HEK293 (cell line): ENCODE measurements at regions of chr1 and their contacts with region 1.

Region 1: DNA sequence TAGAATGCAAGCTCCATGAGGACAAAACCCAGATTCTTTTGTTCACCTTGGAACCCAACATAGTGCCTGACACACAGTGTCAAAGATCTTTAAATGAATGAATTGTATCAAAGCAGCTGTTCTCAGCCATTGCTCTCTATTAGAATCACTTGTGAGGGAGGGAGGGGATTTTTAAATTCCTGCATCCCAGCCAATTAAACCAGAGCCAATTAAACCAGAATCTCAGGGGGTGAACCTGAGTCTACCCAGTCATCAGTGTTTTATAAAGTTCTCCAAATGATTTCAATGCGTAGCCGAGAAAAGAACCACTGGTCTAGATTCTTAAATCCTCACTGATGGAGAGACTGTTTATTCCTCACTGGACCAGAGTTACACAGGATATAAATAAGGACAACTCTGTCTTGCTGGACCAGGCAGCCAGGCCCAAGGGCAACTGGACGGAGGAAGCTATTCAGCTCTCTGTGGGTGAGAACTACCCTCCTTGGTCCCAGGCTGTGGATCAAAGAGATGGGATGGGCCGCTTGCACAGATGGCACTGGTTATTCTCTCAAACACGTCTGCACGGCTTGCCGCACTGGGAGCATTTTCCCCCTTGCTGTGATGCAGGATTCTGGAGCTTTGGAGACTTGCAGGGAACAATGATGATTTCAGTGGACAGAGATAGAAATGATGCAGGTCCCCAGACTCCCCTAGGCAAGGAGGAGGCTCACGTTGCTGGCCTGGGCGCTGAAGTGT is 20.0 kb upstream of the CDCA8 start:
- H3K4me3 ChIP-seq: no peak overlapping the region
- H3K27ac ChIP-seq: no peak overlapping the region
- H3K4me1 ChIP-seq: no peaks in the 10 kb centered on the region
- CTCF ChIP-seq: no peak

Region 2: GRCh38 chr1:37650173-37650572 is 22.1 kb before region 1 on chr1:
- CTCF ChIA-PET with region 1: no interaction called
- POLR2A ChIA-PET with region 1: no interaction called
- H3K4me3 ChIP-seq: no peak overlapping the region
- H3K27ac ChIP-seq: no peak overlapping the region
- H3K4me1 ChIP-seq: no peaks in the 10 kb centered on the region
- CTCF ChIP-seq: no peak

Region 3: GRCh38 chr1:37661401-37661800 is 10.9 kb before region 1 on chr1:
- CTCF ChIA-PET with region 1: no interaction called
- POLR2A ChIA-PET with region 1: no interaction called
- H3K4me3 ChIP-seq: no peak overlapping the region
- H3K27ac ChIP-seq: no peak overlapping the region
- H3K4me1 ChIP-seq: no peaks in the 10 kb centered on the region
- CTCF ChIP-seq: no peak

Region 4: DNA sequence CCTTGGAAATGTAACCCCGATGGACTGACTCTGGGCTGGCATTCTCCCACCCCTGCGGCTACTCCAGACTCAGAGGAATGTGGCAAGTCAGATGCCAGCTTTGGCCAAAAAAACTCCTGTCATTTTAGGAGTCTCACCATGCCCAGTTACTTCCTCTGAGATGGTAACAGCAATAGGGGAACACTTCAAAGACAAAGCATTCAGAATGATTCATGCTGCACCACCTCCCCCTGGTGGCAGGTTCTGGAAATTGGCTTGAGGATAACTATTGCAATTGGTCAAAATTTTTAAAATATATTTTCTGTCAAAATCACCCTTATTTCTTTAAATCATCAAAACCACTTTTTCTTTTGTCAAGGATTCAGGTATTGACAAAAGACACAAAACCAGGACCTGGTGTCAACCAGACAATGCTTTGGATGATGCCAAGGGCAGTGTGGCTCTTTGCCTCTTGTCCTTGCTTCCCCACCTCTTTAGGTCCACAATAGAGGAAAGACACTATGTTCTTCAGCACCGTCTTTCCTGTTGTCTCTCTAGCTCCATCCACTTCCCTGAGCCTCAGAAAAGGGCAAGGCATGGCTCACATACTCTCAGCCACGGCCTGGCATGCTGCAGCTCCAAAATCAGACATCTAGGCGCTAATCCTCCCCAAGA is 10.2 kb after region 1 on chr1:
- CTCF ChIA-PET with region 1: interaction called, 10 read pairs
- POLR2A ChIA-PET with region 1: no interaction called
- H3K4me3 ChIP-seq: no peak overlapping the region
- H3K27ac ChIP-seq: no peak overlapping the region
- H3K4me1 ChIP-seq: no peaks in the 10 kb centered on the region
- CTCF ChIP-seq: peak; percentile 52; the same call in 1 of the 2 replicates

Region 5: DNA sequence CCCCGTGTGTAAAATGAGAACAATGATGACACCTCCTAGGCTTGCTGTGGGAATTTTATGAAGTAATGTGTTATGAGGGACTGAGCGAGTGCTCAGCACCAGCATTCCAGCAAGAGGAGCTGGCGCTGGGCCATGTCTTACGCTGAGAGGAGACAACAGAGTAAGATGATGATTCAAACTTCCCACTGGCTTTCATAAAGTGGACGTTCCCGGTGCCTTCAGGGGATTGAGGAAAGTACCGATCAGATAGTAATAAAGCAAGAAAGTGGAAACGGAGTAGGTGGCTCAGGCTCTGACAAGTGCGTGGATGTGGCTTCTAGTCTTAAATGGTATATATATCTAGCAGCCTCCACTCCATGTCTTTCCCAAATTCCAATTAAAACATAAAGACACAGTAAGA is 68.8 kb after region 1 on chr1:
- CTCF ChIA-PET with region 1: no interaction called
- POLR2A ChIA-PET with region 1: no interaction called
- H3K4me3 ChIP-seq: no peak overlapping the region
- H3K27ac ChIP-seq: no peak overlapping the region
- H3K4me1 ChIP-seq: 0 out of 2 replicates have a peak, but pooled peaks cover 3% of the 10 kb centered on the region
- CTCF ChIP-seq: no peak

Region 6: DNA sequence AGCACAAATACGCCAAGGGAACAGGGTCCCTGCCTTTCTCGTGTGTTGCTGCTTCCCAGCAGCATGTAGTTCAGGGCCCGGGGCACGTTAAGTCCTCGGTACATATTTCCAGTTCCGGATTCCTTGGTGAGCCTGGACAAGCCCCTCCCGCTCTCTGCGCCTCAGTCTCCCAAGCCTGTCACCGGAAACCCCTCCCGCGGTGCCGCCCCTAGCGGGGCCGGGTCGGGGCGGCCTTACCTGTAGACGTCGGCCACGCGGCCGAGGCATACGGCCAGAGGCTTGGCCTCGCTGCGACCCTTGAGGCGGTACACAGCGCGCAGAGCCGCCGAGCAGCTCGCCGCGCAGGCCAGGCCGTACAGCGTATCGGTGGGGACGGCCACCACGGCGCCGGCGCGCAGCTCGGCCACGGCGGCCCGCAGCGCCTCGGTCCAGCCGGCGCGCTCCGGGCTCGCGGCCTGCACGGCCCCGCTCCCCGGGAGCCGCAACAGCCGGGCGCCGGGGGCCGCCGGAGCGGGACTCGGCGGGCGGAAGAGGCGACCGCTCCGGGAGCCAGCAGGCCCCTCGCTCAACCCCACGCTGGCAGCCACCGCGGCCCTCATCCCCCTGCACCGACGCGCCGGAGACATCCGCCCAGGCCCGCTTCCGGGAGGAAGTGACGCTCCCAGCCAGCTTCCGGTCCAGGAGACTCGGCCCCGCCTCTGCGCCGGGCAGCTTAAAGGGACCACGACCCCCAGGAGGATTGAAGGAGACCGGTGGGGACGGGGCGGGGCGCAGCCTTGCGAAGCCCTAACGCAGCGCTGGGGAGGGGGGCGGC is 135.5 kb after region 1 on chr1 and contains the starts of genes C1orf122 and YRDC:
- CTCF ChIA-PET with region 1: no interaction called
- POLR2A ChIA-PET with region 1: no interaction called
- H3K4me3 ChIP-seq: peak within 1 kb of the TSS; percentile 91
- H3K27ac ChIP-seq: peak within 1 kb of the TSS; percentile 65
- H3K4me1 ChIP-seq: peaks cover 3% of the 10 kb centered on the region; the same call in 1 of the 2 replicates
- CTCF ChIP-seq: no peak